K562 (cell line): ENCODE measurements at regions of chr20 and their contacts with region 1.

Region 1: DNA sequence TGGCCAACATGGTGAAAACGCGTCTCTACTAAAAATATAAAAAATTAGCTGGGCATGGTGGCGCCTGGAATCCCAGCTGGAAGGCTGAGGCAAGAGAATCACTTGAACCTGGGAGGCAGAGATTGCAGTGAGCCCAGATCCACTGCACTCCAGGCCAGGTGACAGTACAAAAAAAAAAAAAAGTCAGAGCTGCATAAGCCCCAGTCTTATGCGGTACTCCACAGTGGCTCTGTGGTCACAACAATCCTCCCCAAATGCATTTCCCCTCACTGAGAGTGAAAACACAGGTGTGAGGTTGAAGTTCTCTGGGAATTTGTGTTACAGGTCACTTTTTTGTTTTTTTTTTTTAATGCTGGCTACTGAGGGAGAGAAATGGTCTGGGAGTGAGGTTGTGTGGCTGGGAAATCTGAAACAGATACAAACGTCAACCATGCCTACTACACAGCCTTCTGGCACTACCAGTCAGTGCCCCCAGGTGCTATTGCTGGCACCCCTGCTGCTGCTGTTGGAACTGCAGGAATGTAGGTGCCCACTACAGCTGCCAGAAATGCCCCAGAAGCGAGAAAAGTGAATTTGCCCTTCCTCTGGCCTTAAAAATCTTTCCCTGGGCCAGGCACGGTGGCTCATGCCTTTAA is 5.7 kb downstream of the MRPS26 start:
- DNase-seq: no peak
- ATAC-seq: no peak
- H3K4me3 ChIP-seq: no peak overlapping the region
- H3K27ac ChIP-seq: no peak overlapping the region
- H3K4me1 ChIP-seq: peaks cover 12 to 13% of the 10 kb centered on the region in 2 experiments; a peak in 4 of 5 replicates
- H3K27me3 ChIP-seq: no peaks in the 10 kb centered on the region
- CTCF ChIP-seq: no peak
- EP300 ChIP-seq: no peak
- POLR2A ChIP-seq: no peak
- RAD21 ChIP-seq: no peak

Region 2: GRCh38 chr20:2752567-2753460 is 298.7 kb before region 1 on chr20:
- CTCF ChIA-PET with region 1: no interaction called
- POLR2A ChIA-PET with region 1: no interaction called
- in situ Hi-C with region 1: no loop called
- intact Hi-C with region 1: no loop called
- DNase-seq: peak; percentile 63 to 72 (median 66)
- ATAC-seq: peak; percentile 74
- H3K4me3 ChIP-seq: peak overlapping the region; percentile 40
- H3K27ac ChIP-seq: no peak overlapping the region
- H3K4me1 ChIP-seq: peaks cover 2 to 39% of the 10 kb centered on the region in 2 experiments; a peak in 4 of 5 replicates
- H3K27me3 ChIP-seq: peaks cover 0 to 35% of the 10 kb centered on the region in 2 experiments; a peak in 2 of 5 replicates
- CTCF ChIP-seq: peak; percentile 64 to 79 (median 75)
- EP300 ChIP-seq: no peak
- POLR2A ChIP-seq: no peak
- RAD21 ChIP-seq: peak in 1 of 2 experiments; percentile 45; a peak in 2 of 4 replicates

Region 3: GRCh38 chr20:2840138-2840966 is 211.2 kb before region 1 on chr20 and contains the starts of genes PCED1A and VPS16:
- CTCF ChIA-PET with region 1: no interaction called
- POLR2A ChIA-PET with region 1: no interaction called
- in situ Hi-C with region 1: no loop called
- intact Hi-C with region 1: no loop called
- DNase-seq: peak; percentile 86 to 93 (median 90)
- ATAC-seq: peak; percentile 100
- H3K4me3 ChIP-seq: peak within 1 kb of the TSS; percentile 67
- H3K27ac ChIP-seq: peak within 1 kb of the TSS; percentile 88
- H3K4me1 ChIP-seq: peaks cover 9 to 25% of the 10 kb centered on the region in 2 experiments; a peak in 4 of 5 replicates
- H3K27me3 ChIP-seq: no peaks in the 10 kb centered on the region
- CTCF ChIP-seq: no peak
- EP300 ChIP-seq: no peak
- POLR2A ChIP-seq: peak; percentile 53; the same call in 1 of the 2 replicates
- RAD21 ChIP-seq: no peak
- polyA plus RNA-seq, gene PCED1A: 1.6 to 3.2 TPM
- polyA plus RNA-seq, gene VPS16: 6.8 to 10.2 TPM

Region 4: DNA sequence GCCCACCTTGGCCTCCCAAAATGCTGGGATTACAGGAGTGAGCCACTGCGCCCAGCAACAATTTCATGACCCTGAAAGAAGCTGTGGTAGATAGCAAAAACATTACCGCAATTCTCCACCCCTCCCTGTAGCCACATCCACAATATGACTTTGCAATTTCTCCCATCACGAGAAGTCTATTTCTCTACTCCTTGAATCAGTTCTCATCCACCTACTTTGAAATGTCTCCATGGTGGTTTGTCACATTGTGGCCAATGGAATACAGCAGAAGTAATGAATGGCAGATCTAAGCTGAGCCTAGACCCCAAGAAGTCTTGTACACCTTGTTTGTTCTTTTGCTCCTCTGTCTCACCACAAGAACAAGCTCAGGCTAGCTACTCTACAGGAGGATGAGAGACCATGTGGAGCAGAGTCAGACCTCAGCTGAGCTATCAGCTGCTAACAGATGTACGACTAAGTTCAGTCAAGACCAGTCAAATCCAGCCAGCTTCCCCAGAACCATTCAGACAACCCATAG is 26.2 kb after region 1 on chr20:
- CTCF ChIA-PET with region 1: no interaction called
- POLR2A ChIA-PET with region 1: interaction called, 4 read pairs
- in situ Hi-C with region 1: no loop called
- intact Hi-C with region 1: loop called (anchors 1 kb)
- DNase-seq: peak; percentile 61 to 85 (median 70)
- ATAC-seq: peak; percentile 94
- H3K4me3 ChIP-seq: 0 out of 2 replicates have a peak overlapping the region, but pooled peaks have one; percentile 5
- H3K27ac ChIP-seq: peak overlapping the region; percentile 81
- H3K4me1 ChIP-seq: peaks cover 11 to 18% of the 10 kb centered on the region in 2 experiments; a peak in 4 of 5 replicates
- H3K27me3 ChIP-seq: no peaks in the 10 kb centered on the region
- CTCF ChIP-seq: no peak
- EP300 ChIP-seq: peak; percentile 50; the same call in 1 of the 2 replicates
- POLR2A ChIP-seq: peak; percentile 49; the same call in 1 of the 2 replicates
- RAD21 ChIP-seq: no peak

Region 5: GRCh38 chr20:3106658-3107463 is 55.4 kb after region 1 on chr20:
- CTCF ChIA-PET with region 1: interaction called, 3 read pairs
- POLR2A ChIA-PET with region 1: no interaction called
- in situ Hi-C with region 1: no loop called
- intact Hi-C with region 1: loop called (anchors 2 kb)
- DNase-seq: no peak
- ATAC-seq: no peak
- H3K4me3 ChIP-seq: no peak overlapping the region
- H3K27ac ChIP-seq: no peak overlapping the region
- H3K4me1 ChIP-seq: peaks cover 0 to 11% of the 10 kb centered on the region in 2 experiments; a peak in 4 of 5 replicates
- H3K27me3 ChIP-seq: no peaks in the 10 kb centered on the region
- CTCF ChIP-seq: no peak
- EP300 ChIP-seq: no peak
- POLR2A ChIP-seq: no peak
- RAD21 ChIP-seq: no peak

Region 6: GRCh38 chr20:3115190-3116107 is 63.9 kb after region 1 on chr20:
- CTCF ChIA-PET with region 1: interaction called, 10 read pairs
- POLR2A ChIA-PET with region 1: no interaction called
- in situ Hi-C with region 1: no loop called
- intact Hi-C with region 1: loop called (anchors 2 kb)
- DNase-seq: peak; percentile 51 to 78 (median 72)
- ATAC-seq: peak; percentile 65
- H3K4me3 ChIP-seq: no peak overlapping the region
- H3K27ac ChIP-seq: no peak overlapping the region
- H3K4me1 ChIP-seq: peaks cover 0 to 8% of the 10 kb centered on the region in 2 experiments; a peak in 4 of 5 replicates
- H3K27me3 ChIP-seq: no peaks in the 10 kb centered on the region
- CTCF ChIP-seq: peak; percentile 70 to 79 (median 76)
- EP300 ChIP-seq: no peak
- POLR2A ChIP-seq: no peak
- RAD21 ChIP-seq: peak in 1 of 2 experiments; percentile 29; a peak in 2 of 4 replicates

Region 7: DNA sequence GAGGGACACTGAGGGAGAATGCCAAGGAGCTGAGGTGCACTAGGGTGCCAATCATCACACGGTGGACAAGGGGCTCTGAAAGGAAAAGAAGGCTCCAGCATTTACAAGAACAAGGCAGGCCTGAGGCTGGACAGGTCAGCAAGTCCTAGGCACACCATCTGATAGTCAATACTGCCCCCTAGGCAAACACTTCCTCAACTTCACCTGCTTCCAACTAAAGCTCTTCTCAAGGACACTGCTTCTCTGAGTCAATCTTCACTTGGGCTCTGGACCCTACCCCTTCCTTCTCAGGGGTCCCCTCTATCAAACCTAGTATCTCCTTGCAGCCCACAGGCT is 225.1 kb after region 1 on chr20:
- CTCF ChIA-PET with region 1: interaction called, 9 read pairs
- POLR2A ChIA-PET with region 1: no interaction called
- in situ Hi-C with region 1: no loop called
- intact Hi-C with region 1: loop called (anchors 10 kb)
- DNase-seq: peak in 3 of 4 experiments; percentile 17 to 58 (median 56)
- ATAC-seq: peak; percentile 95
- H3K4me3 ChIP-seq: no peak overlapping the region
- H3K27ac ChIP-seq: no peak overlapping the region
- H3K4me1 ChIP-seq: no peaks in the 10 kb centered on the region
- H3K27me3 ChIP-seq: no peaks in the 10 kb centered on the region
- CTCF ChIP-seq: peak; percentile 61 to 71 (median 70)
- EP300 ChIP-seq: no peak
- POLR2A ChIP-seq: no peak
- RAD21 ChIP-seq: peak; percentile 30 to 59; a peak in 3 of 4 replicates